Activated naive CD4-positive, alpha-beta T cell treated with anti-CD3 and anti-CD28 coated beads, Interleukin-2, amount 10 ng/mL, durations not matched to agents 7 days and 5 days (primary cell): ENCODE measurements at regions of chr3 and their contacts with region 1.

Region 1: DNA sequence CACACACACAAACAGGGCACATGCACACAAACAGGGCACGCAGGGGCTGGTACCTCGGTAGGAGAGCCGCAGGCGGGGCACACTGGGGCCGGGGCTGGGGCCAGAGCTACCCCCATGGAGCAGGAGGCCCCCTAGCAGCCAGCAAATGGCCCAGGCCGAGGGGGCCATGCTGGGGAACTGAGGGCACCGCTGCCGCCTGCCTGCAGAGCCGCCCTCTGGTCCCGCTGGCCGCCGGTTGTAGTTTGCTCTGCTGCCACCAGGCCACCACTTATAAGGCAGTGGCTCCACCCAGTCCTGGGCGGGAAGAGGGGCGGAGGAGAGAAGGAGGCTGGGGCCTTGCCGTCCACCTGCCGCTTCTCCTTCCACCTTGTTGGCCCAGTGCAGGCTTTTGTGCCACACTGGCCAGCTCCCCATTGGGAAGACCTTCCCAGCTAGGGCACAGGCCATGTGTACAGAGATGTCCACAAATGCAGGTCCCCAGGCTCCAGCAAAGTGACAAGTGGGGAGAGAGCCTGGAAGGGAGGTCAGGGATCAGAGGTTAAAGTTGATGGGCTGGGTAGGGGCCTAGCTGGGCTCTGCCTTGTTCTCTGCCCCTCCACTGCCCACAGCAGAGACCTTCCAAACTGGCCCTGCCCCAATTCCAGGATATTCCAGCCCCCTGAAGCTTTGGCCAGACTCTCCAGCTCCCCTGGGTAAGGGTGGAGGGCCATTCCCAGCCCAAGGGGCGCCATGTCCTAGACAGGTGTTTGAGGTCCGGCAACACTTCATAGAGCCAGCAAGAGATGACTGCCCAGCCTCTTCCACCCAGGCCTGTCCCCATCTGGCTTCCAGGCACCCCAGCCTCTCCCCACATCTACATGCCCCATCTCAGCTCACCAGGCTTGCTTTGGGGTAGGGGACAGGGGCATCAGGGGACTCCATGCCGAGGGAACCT is at the start of gene SEMA3G:
- DNase-seq: peak; percentile 89
- H3K4me3 Mint-ChIP-seq: no peak within 1 kb of the TSS
- H3K27ac Mint-ChIP-seq: no peak within 1 kb of the TSS
- H3K4me1 Mint-ChIP-seq: peaks cover 13% of the 10 kb centered on the region
- H3K27me3 Mint-ChIP-seq: peaks cover 8% of the 10 kb centered on the region

Region 2: DNA sequence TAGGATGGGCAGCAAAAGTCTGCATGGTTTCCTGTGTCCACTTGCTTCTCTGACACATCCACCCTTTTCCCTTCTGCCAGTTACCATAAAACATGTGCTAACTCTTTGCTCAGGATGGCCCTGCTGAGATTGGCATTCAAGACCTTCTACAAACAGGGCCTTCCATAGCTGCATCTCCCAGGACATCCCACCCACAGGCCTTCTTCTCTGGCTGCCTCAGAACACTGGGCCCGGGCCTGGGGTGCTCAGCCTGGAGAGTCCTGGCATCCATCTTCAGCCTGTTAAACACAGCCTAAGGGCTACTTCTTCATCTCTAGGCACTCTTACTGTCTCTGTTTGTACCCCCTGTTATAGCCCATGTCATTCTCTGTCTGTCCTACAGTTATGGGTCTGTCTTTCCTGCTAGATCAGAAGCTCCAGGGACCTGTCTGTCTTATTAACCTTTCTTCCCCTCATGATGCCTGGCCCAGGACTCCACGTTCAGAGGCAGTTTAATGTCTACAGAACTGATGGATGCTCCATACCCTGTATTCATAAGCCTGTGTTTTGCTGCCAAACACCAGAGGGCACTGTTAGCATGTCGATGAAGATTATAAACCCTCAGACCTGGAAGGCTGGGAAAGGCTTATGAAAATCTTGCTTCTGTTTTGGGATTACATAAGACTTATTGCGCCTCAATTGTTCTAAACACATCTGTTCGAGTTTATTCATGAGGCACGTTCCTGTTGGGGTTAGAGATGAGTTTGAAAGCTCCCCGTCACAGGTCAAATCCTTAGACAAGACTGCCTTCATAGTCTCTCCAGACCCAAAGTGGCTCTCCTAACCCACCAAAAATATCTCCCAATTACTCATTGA is 16.7 kb before region 1 on chr3:
- CTCF ChIA-PET with region 1: interaction called, 69 read pairs
- DNase-seq: peak; percentile 55
- H3K4me3 Mint-ChIP-seq: no peak overlapping the region
- H3K27ac Mint-ChIP-seq: no peak overlapping the region
- H3K4me1 Mint-ChIP-seq: peaks cover 2% of the 10 kb centered on the region
- H3K27me3 Mint-ChIP-seq: peaks cover 28% of the 10 kb centered on the region

Region 3: GRCh38 chr3:52455283-52456168 is 10.4 kb after region 1 on chr3 and contains the start of gene NISCH:
- CTCF ChIA-PET with region 1: interaction called, 25 read pairs
- DNase-seq: peak; percentile 96
- H3K4me3 Mint-ChIP-seq: peak within 1 kb of the TSS; percentile 85
- H3K27ac Mint-ChIP-seq: peak within 1 kb of the TSS; percentile 91
- H3K4me1 Mint-ChIP-seq: peaks cover 42% of the 10 kb centered on the region
- H3K27me3 Mint-ChIP-seq: no peaks in the 10 kb centered on the region

Region 4: DNA sequence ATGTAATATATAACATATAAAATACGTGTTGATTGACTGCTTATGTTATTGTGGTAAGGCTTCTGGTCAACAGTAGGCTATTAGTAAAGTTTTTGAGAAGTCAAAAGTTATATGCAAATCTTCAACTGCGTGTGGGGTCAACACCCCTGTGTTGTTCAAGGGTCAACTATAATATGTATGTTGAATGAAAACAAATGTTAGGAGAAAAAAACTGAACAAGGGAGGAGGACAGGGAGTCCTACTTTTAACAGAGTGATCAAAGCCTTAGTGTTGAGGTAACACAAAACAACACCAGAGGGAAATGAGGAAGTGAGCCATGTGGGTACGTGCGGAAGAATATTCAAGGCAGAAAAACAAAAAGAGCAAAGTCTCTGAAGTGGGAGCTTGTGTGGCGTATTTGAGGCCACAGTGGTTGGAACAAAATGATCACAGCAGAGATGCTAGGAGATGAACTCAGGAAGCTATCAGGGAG is 538.2 kb after region 1 on chr3:
- CTCF ChIA-PET with region 1: no interaction called
- DNase-seq: peak; percentile 80
- H3K4me3 Mint-ChIP-seq: peak overlapping the region; percentile 49
- H3K27ac Mint-ChIP-seq: peak overlapping the region; percentile 89
- H3K4me1 Mint-ChIP-seq: peaks cover 35% of the 10 kb centered on the region
- H3K27me3 Mint-ChIP-seq: no peaks in the 10 kb centered on the region